ENCODE measurements at regions of chr7 and their contacts with region 1.

Region 1: DNA sequence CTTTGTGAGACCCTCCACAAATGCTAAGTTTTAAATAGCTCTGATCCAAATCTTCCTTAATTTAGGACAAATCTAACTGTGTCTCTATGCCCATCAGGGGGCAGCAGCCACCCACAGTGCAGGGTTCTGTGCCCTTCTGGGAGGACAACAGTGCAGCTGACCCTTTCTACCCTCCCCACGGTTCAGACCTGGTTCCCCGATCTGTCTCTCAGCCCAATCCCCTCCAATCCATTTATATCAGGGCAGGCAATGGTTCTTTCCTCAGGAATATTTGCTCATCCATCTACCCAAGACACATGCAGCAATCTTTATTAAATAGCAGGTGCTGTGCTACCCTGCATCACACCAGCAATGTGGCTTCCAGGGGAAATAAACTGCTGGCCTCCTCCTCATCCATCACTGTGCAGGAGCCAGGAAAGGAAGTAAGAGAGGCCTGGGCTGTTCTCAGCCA is 4.0 kb upstream of the RBM28 start:
- DNase-seq: peak; percentile 50
- ATAC-seq: peak; percentile 66
- H3K4me3 ChIP-seq: no peak overlapping the region
- H3K27ac ChIP-seq: no peak overlapping the region
- H3K4me1 ChIP-seq: peaks cover 2% of the 10 kb centered on the region; the same call in 1 of the 2 replicates
- H3K27me3 ChIP-seq: peaks cover 2 to 11% of the 10 kb centered on the region in 2 experiments; a peak in 4 of 5 replicates
- CTCF ChIP-seq: peak; percentile 84
- EP300 ChIP-seq: no peak
- POLR2A ChIP-seq: no peak
- RAD21 ChIP-seq: peak; percentile 73

Region 2: GRCh38 chr7:128174386-128174785 is 173.3 kb before region 1 on chr7:
- CTCF ChIA-PET with region 1: no interaction called
- POLR2A ChIA-PET with region 1: no interaction called
- in situ Hi-C with region 1: no loop called
- intact Hi-C with region 1: no loop called
- DNase-seq: no peak
- ATAC-seq: no peak
- H3K4me3 ChIP-seq: no peak overlapping the region
- H3K27ac ChIP-seq: no peak overlapping the region
- H3K4me1 ChIP-seq: no peaks in the 10 kb centered on the region
- H3K27me3 ChIP-seq: peaks cover 2 to 58% of the 10 kb centered on the region in 2 experiments; a peak in 3 of 5 replicates
- CTCF ChIP-seq: no peak
- EP300 ChIP-seq: no peak
- POLR2A ChIP-seq: no peak
- RAD21 ChIP-seq: no peak

Region 3: DNA sequence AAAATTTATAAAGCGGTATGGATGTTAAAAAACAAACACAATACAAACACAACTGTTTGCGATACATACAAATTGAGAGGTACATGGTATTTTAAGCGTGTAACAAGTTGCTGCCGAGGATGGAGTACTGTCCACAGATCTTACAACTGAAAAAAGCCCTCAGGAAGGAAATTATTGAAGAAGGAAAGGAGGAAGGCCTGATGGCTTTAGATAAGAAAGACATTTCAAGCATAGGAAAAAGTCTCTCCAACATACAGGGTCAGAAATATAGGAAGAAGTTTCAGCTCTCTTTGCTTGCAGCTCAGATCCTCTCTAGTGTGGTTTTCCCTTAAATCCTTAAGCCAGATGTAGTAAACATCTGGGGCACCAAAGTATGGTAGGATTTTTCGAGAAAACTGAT is 29.0 kb before region 1 on chr7:
- CTCF ChIA-PET with region 1: no interaction called
- POLR2A ChIA-PET with region 1: no interaction called
- in situ Hi-C with region 1: no loop called
- intact Hi-C with region 1: no loop called
- DNase-seq: no peak
- ATAC-seq: no peak
- H3K4me3 ChIP-seq: no peak overlapping the region
- H3K27ac ChIP-seq: no peak overlapping the region
- H3K4me1 ChIP-seq: no peaks in the 10 kb centered on the region
- H3K27me3 ChIP-seq: no peaks in the 10 kb centered on the region
- CTCF ChIP-seq: no peak
- EP300 ChIP-seq: no peak
- POLR2A ChIP-seq: no peak
- RAD21 ChIP-seq: no peak

Region 4: DNA sequence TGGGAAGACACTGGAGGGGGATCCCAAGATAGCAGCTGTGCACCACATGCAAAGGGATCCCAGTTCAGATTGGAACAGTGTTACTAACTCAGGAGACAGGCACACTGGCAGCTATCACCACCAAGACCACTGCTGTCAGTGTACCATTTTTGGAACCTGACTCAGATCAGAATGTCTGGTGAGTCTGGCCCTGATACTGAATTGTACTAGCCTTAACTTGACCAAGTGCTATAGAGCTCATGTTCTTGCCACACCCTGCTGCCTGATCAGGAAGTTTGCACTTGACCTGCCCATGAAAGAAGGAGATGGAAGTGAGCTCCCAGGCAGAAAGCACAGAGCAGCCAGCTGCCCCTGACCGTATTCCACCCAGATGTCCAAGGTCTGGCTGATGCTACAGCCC is 18.6 kb after region 1 on chr7:
- CTCF ChIA-PET with region 1: no interaction called
- POLR2A ChIA-PET with region 1: no interaction called
- in situ Hi-C with region 1: no loop called
- intact Hi-C with region 1: no loop called
- DNase-seq: no peak
- ATAC-seq: no peak
- H3K4me3 ChIP-seq: no peak overlapping the region
- H3K27ac ChIP-seq: no peak overlapping the region
- H3K4me1 ChIP-seq: peaks cover 7% of the 10 kb centered on the region; the same call in 1 of the 2 replicates
- H3K27me3 ChIP-seq: peaks cover 8 to 47% of the 10 kb centered on the region in 2 experiments; a peak in 4 of 5 replicates
- CTCF ChIP-seq: no peak
- EP300 ChIP-seq: no peak
- POLR2A ChIP-seq: no peak
- RAD21 ChIP-seq: no peak

Region 5: DNA sequence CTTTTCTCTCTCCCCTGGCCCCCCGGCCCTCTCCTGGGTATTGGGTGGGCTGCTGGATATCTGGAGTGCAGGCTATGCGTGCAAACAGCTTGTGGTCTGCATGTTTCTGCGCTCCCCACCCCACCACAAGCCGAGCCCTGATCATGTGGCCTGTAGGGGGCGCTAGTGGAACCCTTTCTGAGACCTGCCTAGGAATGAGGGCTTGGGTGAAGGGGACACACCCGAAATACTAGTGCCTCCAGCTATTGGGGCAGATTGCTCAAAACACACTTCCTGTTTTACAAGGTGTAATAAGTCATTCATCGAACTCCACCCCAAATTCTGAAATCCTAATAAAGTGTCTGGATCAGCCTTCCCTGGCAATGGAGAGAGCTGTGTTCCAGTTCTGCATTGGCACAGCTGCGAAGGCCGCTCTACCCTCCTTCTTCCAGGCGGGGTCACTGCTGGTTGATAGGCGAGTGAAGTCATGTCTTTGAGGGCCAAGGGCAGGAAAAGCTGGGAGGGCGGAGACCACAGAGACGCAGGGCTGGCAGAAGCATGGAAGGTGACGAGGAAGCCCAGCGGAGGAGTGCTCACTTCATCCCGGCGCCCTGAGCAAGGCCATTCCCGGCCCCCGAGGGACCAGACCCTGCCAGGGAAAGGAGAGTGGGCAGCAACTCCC is 33.6 kb after region 1 on chr7:
- CTCF ChIA-PET with region 1: no interaction called
- POLR2A ChIA-PET with region 1: no interaction called
- in situ Hi-C with region 1: loop called (anchors 5 kb)
- intact Hi-C with region 1: no loop called
- DNase-seq: no peak
- ATAC-seq: peak; percentile 62
- H3K4me3 ChIP-seq: no peak overlapping the region
- H3K27ac ChIP-seq: no peak overlapping the region
- H3K4me1 ChIP-seq: peaks cover 9% of the 10 kb centered on the region; the same call in 1 of the 2 replicates
- H3K27me3 ChIP-seq: peaks cover 1 to 23% of the 10 kb centered on the region in 2 experiments; a peak in 3 of 5 replicates
- CTCF ChIP-seq: peak; percentile 56
- EP300 ChIP-seq: no peak
- POLR2A ChIP-seq: no peak
- RAD21 ChIP-seq: no peak

Region 6: GRCh38 chr7:128387216-128388144 is 39.8 kb after region 1 on chr7:
- CTCF ChIA-PET with region 1: interaction called, 56 read pairs
- POLR2A ChIA-PET with region 1: interaction called, 4 read pairs
- in situ Hi-C with region 1: loop called (anchors 5 kb)
- intact Hi-C with region 1: loop called (anchors 1 kb)
- DNase-seq: peak; percentile 68
- ATAC-seq: peak; percentile 87
- H3K4me3 ChIP-seq: no peak overlapping the region
- H3K27ac ChIP-seq: no peak overlapping the region
- H3K4me1 ChIP-seq: peaks cover 21% of the 10 kb centered on the region; the same call in 1 of the 2 replicates
- H3K27me3 ChIP-seq: 0 out of 5 replicates have a peak, but pooled peaks cover 1 to 5% of the 10 kb centered on the region in 2 experiments
- CTCF ChIP-seq: peak; percentile 90
- EP300 ChIP-seq: no peak
- POLR2A ChIP-seq: no peak
- RAD21 ChIP-seq: peak; percentile 84